H1 (cell line): ENCODE measurements at regions of chr6 and their contacts with region 1.

Region 1: GRCh38 chr6:39102071-39102820 is 12.7 kb downstream of the SAYSD1 start:
- DNase-seq: peak in 1 of 2 experiments; percentile 86
- H3K4me3 ChIP-seq: no peak overlapping the region
- H3K27ac ChIP-seq: no peak overlapping the region
- H3K4me1 ChIP-seq: no peaks in the 10 kb centered on the region; a peak in 1 of 7 replicates
- H3K27me3 ChIP-seq: no peaks in the 10 kb centered on the region; a peak in 1 of 7 replicates
- CTCF ChIP-seq: peak; percentile 88 to 92 (median 90)
- EP300 ChIP-seq: no peak
- POLR2A ChIP-seq: no peak
- RAD21 ChIP-seq: peak; percentile 84 to 87

Region 2: GRCh38 chr6:38871741-38872568 is 230.3 kb before region 1 on chr6:
- CTCF ChIA-PET with region 1: interaction called, 22 read pairs
- POLR2A ChIA-PET with region 1: no interaction called
- DNase-seq: peak; percentile 39 to 86
- H3K4me3 ChIP-seq: no peak overlapping the region
- H3K27ac ChIP-seq: no peak overlapping the region
- H3K4me1 ChIP-seq: no peaks in the 10 kb centered on the region; a peak in 1 of 7 replicates
- H3K27me3 ChIP-seq: no peaks in the 10 kb centered on the region
- CTCF ChIP-seq: peak; percentile 73 to 96 (median 91)
- EP300 ChIP-seq: no peak
- POLR2A ChIP-seq: no peak
- RAD21 ChIP-seq: peak; percentile 92 to 96

Region 3: DNA sequence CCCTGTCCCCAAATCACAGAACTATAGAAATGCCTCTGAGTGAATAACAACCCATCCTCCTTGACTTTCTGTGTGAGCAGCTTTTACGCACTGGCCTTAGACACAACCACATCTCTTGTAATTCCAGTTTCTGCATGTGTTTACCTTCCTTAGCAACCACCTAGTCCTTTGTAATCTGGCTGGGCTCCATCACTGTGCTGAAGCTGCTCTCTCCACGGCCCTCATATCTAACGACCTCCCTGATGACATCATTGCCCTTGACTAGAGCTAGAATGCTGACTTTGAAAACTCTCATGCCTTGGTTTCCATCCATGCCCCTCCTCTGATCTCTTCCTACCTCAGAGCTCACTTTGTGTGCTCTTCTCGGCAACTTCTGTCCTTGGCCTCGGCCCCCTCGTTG is 84.1 kb before region 1 on chr6:
- CTCF ChIA-PET with region 1: interaction called, 15 read pairs
- POLR2A ChIA-PET with region 1: no interaction called
- DNase-seq: no peak
- H3K4me3 ChIP-seq: no peak overlapping the region
- H3K27ac ChIP-seq: no peak overlapping the region
- H3K4me1 ChIP-seq: no peaks in the 10 kb centered on the region
- H3K27me3 ChIP-seq: no peaks in the 10 kb centered on the region; a peak in 2 of 7 replicates
- CTCF ChIP-seq: no peak
- EP300 ChIP-seq: no peak
- POLR2A ChIP-seq: no peak
- RAD21 ChIP-seq: no peak

Region 4: DNA sequence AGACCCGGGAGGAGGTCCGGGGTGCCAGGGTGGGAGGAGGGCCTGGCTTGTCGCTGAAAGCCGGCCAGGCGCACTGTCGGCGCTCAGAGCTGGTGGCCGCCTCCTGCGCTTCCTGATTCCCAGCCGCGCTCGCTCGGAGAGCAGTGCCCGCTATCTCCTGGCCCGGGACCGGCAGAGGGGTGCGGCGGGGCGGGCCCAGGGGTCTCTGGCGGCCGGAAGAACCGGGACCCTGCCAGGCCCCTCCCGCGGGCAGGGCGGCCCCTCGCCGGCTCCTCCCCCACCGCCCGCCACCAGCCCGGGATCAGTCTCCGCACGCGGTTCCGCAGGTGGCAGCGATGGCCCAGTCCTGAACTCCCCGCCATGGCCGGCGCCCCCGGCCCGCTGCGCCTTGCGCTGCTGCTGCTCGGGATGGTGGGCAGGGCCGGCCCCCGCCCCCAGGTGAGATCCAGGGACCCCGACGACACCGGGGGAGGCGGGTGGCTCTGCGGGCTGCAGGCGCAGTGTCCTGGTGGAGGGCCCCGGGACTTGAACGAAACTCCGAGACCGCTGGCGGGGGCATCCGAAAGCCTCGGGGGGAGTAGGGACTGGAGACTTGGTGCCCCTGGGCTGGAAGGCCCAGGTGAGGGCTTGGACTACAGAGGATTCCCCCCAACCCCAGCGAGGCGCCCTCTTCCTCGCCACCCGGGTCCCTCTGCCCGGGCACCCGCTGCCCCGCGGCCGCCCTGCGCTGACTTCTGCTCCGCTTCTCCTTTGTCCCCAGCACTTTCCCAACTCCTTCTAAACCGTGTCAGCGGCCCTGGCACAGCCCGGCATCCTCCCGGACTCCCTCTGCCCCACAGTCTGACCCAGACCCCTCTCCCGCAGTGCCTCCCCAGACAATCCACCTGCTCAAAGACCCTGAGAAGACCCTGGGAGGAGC is 53.5 kb before region 1 on chr6 and contains the start of gene GLP1R:
- CTCF ChIA-PET with region 1: interaction called, 14 read pairs
- POLR2A ChIA-PET with region 1: no interaction called
- DNase-seq: peak in 1 of 2 experiments; percentile 82
- H3K4me3 ChIP-seq: peak within 1 kb of the TSS; percentile 65 to 85 (median 72)
- H3K27ac ChIP-seq: no peak within 1 kb of the TSS
- H3K4me1 ChIP-seq: peaks cover 0 to 6% (median 4%) of the 10 kb centered on the region in 4 experiments; a peak in 5 of 7 replicates
- H3K27me3 ChIP-seq: peaks cover 3 to 39% (median 33%) of the 10 kb centered on the region in 4 experiments
- CTCF ChIP-seq: no peak
- EP300 ChIP-seq: no peak
- POLR2A ChIP-seq: no peak
- RAD21 ChIP-seq: no peak
- total RNA-seq, gene GLP1R: 2.6 and 3.0 TPM in 2 replicates

Region 5: GRCh38 chr6:39088331-39088730 is 13.9 kb before region 1 on chr6:
- CTCF ChIA-PET with region 1: interaction called, 150 read pairs
- POLR2A ChIA-PET with region 1: no interaction called
- DNase-seq: peak in 1 of 2 experiments; percentile 50
- H3K4me3 ChIP-seq: peak overlapping the region in 1 of 4 experiments; percentile 5; a peak in 2 of 8 replicates
- H3K27ac ChIP-seq: no peak overlapping the region
- H3K4me1 ChIP-seq: peaks cover 10 to 35% (median 12%) of the 10 kb centered on the region in 4 experiments
- H3K27me3 ChIP-seq: no peaks in the 10 kb centered on the region
- CTCF ChIP-seq: peak; percentile 56 to 73 (median 67)
- EP300 ChIP-seq: no peak; a peak in 1 of 3 replicates
- POLR2A ChIP-seq: no peak
- RAD21 ChIP-seq: peak; percentile 61 to 74

Region 6: DNA sequence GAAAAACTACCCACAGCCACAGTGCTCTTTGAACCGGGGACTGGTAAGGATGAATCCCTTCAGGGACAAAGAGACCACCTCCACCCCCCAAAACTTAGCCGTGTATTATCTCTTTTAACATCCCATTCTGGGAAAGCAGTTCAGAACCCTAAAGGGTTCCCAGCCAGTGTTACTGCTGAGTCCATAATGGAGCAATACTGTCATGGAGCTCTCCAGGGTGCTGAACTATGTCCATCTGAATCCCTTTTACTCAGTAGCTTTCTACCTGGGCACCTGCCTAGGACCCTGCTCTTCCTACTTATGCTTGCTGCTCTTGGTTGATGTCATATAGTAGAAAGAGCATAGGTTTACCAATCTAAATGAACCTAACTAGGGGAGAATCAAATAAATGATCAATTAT is 35.0 kb after region 1 on chr6:
- CTCF ChIA-PET with region 1: interaction called, 10 read pairs
- POLR2A ChIA-PET with region 1: no interaction called
- DNase-seq: peak in 1 of 2 experiments; percentile 66
- H3K4me3 ChIP-seq: no peak overlapping the region
- H3K27ac ChIP-seq: no peak overlapping the region
- H3K4me1 ChIP-seq: no peaks in the 10 kb centered on the region
- H3K27me3 ChIP-seq: no peaks in the 10 kb centered on the region
- CTCF ChIP-seq: no peak
- EP300 ChIP-seq: no peak
- POLR2A ChIP-seq: no peak
- RAD21 ChIP-seq: no peak